ENCODE measurements at regions of chr22 and their contacts with region 1.

Region 1: DNA sequence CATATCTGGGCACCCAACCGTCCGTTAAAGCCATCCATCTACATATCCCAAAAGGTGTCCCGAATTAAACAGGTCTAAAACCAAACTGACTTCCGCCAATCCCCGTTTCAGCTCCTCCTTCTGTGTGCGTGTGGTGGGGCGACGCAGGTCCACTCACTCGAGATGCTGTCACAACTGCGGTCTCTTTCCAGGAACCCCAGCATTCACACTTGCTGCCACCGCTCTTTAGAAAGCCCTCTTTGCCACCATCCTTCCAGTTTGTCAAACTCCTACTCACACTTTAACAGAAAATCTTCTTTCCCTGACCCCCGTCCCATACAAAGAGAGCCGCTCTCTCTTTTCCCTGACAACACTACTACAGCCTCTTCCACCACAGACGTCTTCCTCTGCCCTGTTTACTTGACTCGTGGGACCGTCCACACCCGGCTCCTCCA is 467 bp downstream of the ESS2 start:
- DNase-seq: no peak
- ATAC-seq: no peak
- H3K4me3 Mint-ChIP-seq: peak overlapping the region; percentile 100
- H3K27ac Mint-ChIP-seq: peak overlapping the region; percentile 95
- H3K4me1 Mint-ChIP-seq: peaks cover 20% of the 10 kb centered on the region
- H3K27me3 Mint-ChIP-seq: peaks cover 13% of the 10 kb centered on the region
- CTCF ChIP-seq: no peak

Region 2: DNA sequence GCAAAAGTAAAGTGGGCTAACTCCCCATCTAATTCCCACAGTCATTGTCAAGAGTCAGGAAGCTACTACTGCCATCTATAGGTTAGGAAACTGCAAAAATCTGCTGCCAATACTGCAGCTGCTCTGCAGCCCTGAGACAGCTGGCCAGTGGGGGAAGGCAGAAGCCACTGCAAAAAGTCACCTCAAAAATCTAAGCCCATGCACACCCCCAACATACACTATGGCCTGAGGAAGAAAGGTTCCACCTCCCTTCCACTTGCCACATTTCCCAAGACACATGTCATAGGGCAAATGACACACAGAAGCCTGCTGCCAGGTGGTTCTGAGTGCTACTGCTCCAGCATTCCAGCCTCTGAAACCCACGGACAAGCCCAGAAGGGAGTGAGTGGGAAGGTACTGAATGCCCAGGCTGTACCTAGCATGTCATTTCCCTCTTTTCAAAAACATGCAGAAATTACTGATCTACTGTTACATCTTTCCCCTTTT is 58.7 kb before region 1 on chr22:
- CTCF ChIA-PET with region 1: no interaction called
- POLR2A ChIA-PET with region 1: interaction called, 12 read pairs
- intact Hi-C with region 1: no loop called
- DNase-seq: no peak
- ATAC-seq: no peak
- H3K4me3 Mint-ChIP-seq: peak overlapping the region; percentile 63
- H3K27ac Mint-ChIP-seq: peak overlapping the region; percentile 67
- H3K4me1 Mint-ChIP-seq: peaks cover 32% of the 10 kb centered on the region
- H3K27me3 Mint-ChIP-seq: no peaks in the 10 kb centered on the region
- CTCF ChIP-seq: no peak

Region 3: GRCh38 chr22:19122143-19122751 is 21.7 kb before region 1 on chr22 and contains the start of gene DGCR2:
- CTCF ChIA-PET with region 1: interaction called, 3 read pairs
- POLR2A ChIA-PET with region 1: interaction called, 23 read pairs
- intact Hi-C with region 1: loop called (anchors 1 kb)
- DNase-seq: peak; percentile 87
- ATAC-seq: peak; percentile 97
- H3K4me3 Mint-ChIP-seq: peak within 1 kb of the TSS; percentile 89
- H3K27ac Mint-ChIP-seq: peak within 1 kb of the TSS; percentile 74
- H3K4me1 Mint-ChIP-seq: peaks cover 50% of the 10 kb centered on the region
- H3K27me3 Mint-ChIP-seq: no peaks in the 10 kb centered on the region
- CTCF ChIP-seq: no peak
- total RNA-seq, gene DGCR2: 29.3 and 33.2 TPM in 2 replicates

Region 4: GRCh38 chr22:19291580-19292457 is 147.8 kb after region 1 on chr22 and contains the start of gene CLTCL1:
- CTCF ChIA-PET with region 1: no interaction called
- POLR2A ChIA-PET with region 1: no interaction called
- intact Hi-C with region 1: loop called (anchors 10 kb)
- DNase-seq: peak; percentile 75
- ATAC-seq: peak; percentile 78
- H3K4me3 Mint-ChIP-seq: peak within 1 kb of the TSS; percentile 91
- H3K27ac Mint-ChIP-seq: peak within 1 kb of the TSS; percentile 83
- H3K4me1 Mint-ChIP-seq: peaks cover 18% of the 10 kb centered on the region
- H3K27me3 Mint-ChIP-seq: peaks cover 12% of the 10 kb centered on the region
- CTCF ChIP-seq: no peak
- total RNA-seq, gene CLTCL1: 2.7 and 5.0 TPM in 2 replicates

Region 5: GRCh38 chr22:19432133-19432851 is 288.3 kb after region 1 on chr22 and contains the start of gene MRPL40:
- CTCF ChIA-PET with region 1: no interaction called
- POLR2A ChIA-PET with region 1: interaction called, 9 read pairs
- intact Hi-C with region 1: loop called (anchors 1 kb)
- DNase-seq: peak; percentile 83
- ATAC-seq: peak; percentile 87
- H3K4me3 Mint-ChIP-seq: peak within 1 kb of the TSS; percentile 90
- H3K27ac Mint-ChIP-seq: peak within 1 kb of the TSS; percentile 91
- H3K4me1 Mint-ChIP-seq: peaks cover 59% of the 10 kb centered on the region
- H3K27me3 Mint-ChIP-seq: no peaks in the 10 kb centered on the region
- CTCF ChIP-seq: no peak
- total RNA-seq, gene MRPL40: 24.0 and 24.3 TPM in 2 replicates

Region 6: GRCh38 chr22:19629720-19630419 is 485.9 kb after region 1 on chr22:
- CTCF ChIA-PET with region 1: interaction called, 46 read pairs
- POLR2A ChIA-PET with region 1: interaction called, 6 read pairs
- intact Hi-C with region 1: loop called (anchors 1 kb)
- DNase-seq: peak; percentile 74
- ATAC-seq: peak; percentile 94
- H3K4me3 Mint-ChIP-seq: no peak overlapping the region
- H3K27ac Mint-ChIP-seq: no peak overlapping the region
- H3K4me1 Mint-ChIP-seq: no peaks in the 10 kb centered on the region
- H3K27me3 Mint-ChIP-seq: peaks cover 24% of the 10 kb centered on the region
- CTCF ChIP-seq: peak; percentile 78

Measured in activated B cell treated with CpG ODN at 0.5 μM for 24 hours (primary cell).